GM13977 (cell line): ENCODE measurements at regions of chr14 and their contacts with region 1.

Region 1: DNA sequence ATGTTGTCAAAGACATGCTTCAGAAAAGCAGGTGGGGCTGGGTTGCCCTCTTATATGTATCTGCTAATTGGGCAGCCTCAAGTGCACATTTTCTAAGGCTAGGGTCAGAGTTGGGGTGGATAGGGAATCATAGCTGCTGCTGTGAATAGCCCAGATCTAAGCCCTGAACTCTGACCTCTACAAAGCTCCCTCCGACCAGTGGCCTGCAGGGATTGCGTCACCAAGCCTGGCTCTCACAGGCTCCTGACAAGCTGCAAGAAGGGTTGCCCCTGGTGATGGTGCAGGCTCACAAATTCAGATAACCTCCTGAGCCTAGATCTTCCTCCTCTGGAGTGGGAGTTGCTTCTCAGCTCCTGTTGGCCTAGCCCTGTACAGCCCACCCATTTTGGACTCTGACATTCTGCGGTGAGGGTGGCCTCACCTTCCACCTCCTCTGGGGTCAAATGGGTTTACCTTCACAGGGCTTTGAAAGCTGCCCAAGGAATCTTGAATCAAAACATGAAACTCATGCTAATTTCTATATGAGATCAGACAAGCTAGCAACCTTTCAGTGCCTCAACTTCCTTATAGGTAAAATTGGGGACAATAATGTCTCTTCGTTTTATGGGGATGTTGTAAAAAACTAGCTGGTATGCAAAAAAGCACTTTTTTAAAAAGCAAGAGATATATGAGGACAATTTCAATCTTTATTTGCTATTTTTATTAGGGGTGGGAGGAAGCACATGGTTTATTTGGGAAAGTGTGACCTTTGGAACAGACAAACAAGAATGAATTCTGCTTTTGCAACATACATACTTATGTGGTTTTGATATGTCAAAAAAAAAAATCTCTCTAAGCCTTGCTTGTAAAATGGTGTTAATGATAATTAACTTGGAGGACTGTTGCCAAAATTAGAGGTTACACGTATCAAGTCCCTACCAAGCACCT is 4.9 kb upstream of the SUSD6 start:
- DNase-seq: no peak
- CTCF ChIP-seq: no peak

Region 2: DNA sequence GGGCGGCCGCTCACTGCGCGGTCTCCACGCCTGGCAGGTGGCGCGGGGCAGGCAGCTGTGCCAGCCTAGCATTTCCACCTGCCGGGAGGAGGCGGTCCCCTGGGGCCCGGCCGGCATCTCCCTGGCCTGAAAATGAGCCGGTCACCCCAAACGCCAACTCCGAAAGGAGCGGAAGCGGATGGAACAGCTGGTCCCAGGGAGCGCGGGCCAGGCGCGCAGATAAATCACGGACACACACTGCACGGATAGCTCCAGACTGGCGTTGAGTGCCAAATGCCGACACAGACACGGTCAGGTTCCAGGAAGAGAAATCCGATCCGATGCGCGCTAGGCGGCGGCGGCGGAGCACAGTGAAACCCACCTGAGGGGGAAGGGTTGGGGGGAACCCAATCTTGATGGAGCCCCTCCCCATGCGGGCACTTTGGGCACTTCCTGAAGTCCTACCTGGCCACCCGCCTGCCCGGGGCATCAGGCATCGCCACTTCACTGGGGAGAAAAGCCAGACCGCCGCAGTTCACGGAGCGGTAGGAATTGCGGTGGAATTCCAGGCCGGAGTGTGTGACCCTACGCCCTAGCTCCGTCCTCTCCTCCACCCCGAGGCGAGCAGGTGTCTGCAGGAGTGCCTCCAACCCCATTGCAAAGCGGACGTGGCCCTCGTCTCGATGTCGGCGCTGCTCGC is 122.6 kb before region 1 on chr14:
- in situ Hi-C with region 1: no loop called
- DNase-seq: peak; percentile 45
- CTCF ChIP-seq: no peak

Region 3: GRCh38 chr14:69715725-69716477 is 109.4 kb after region 1 on chr14:
- in situ Hi-C with region 1: loop called (anchors 5 kb)
- DNase-seq: no peak
- CTCF ChIP-seq: no peak

Region 4: DNA sequence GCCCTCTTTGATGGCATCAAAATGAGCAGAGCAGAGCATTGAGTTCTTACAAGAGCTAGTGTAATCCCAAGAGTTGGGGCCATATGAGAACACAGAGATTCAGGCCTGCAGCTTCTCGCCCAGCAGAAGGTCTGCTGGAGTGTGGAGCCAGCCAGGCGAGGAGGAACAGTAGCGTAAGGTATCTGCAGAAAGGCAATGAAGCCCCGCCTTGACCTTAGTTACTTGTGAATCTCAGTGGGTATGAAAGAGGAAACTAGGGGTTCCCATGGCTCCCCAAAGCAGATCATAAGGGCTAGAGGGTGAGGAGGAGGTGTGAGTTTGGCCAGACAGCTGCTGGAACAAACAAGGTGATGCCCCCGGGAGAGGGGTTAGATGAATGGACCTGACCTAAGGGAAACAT is 532.9 kb after region 1 on chr14:
- in situ Hi-C with region 1: no loop called
- DNase-seq: peak; percentile 29
- CTCF ChIP-seq: no peak